CD8-positive, alpha-beta memory T cell (primary cell): ENCODE measurements at regions of chr10 and their contacts with region 1.

Region 1: DNA sequence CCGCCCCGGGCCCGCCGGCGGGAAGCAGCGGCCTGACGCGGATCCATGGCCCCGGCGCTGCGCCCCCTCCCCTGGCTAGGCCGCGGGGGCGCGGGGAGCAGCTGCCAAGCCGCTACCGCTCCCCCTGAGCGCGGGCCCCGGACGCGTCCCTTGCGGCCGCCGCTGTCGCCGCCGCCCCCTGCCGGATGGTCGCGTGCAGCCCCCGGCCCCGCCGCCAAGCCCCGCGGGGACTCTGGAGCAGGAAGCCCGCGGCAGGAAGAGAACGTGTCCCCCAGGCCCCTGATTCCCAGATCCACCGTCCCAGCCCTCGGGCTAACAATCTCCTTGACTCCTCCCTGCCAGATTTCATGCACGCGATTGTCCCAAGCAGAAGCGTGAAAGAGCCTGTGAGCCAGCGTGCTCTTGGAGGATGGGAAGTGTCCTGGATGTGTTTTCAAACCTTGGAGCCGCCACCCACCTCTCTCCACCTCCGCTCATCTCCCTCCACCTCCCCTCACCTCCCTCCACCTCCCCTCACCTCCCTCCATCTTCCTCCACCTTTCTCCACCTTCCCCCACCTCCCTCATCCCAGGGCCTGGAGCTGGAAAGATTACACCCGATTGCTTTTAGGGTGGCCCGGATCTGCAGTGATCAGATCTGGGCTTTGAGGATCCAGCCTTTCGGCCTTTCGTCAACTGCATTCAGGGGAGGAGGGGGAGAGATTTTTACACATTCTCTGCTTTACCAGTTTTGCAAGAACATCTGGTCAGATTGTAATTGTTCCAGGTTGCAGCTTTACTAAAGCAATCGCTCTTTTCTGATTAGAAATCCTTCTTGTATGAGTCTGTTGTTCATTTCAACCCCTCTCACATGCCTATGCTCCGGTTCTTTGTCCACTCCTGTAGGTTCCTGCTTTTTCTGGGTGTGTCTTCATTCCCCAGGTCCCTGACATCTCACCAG is 570 bp upstream of the PRTFDC1 start:
- DNase-seq: peak; percentile 43 to 69 (median 58)
- H3K4me3 ChIP-seq: peak overlapping the region; percentile 57
- H3K4me3 Mint-ChIP-seq: peak overlapping the region; percentile 79 to 90 (median 85)
- H3K27ac ChIP-seq: peak overlapping the region; percentile 71
- H3K27ac Mint-ChIP-seq: peak overlapping the region in 7 of 8 donors; percentile 72 to 93 (median 85)
- H3K4me1 ChIP-seq: peaks cover 12% of the 10 kb centered on the region
- H3K4me1 Mint-ChIP-seq: peaks cover 18 to 35% (median 22%) of the 10 kb centered on the region in 3 donors
- H3K27me3 ChIP-seq: no peaks in the 10 kb centered on the region
- H3K27me3 Mint-ChIP-seq: peaks cover 0 to 2% of the 10 kb centered on the region in 2 donors

Region 2: DNA sequence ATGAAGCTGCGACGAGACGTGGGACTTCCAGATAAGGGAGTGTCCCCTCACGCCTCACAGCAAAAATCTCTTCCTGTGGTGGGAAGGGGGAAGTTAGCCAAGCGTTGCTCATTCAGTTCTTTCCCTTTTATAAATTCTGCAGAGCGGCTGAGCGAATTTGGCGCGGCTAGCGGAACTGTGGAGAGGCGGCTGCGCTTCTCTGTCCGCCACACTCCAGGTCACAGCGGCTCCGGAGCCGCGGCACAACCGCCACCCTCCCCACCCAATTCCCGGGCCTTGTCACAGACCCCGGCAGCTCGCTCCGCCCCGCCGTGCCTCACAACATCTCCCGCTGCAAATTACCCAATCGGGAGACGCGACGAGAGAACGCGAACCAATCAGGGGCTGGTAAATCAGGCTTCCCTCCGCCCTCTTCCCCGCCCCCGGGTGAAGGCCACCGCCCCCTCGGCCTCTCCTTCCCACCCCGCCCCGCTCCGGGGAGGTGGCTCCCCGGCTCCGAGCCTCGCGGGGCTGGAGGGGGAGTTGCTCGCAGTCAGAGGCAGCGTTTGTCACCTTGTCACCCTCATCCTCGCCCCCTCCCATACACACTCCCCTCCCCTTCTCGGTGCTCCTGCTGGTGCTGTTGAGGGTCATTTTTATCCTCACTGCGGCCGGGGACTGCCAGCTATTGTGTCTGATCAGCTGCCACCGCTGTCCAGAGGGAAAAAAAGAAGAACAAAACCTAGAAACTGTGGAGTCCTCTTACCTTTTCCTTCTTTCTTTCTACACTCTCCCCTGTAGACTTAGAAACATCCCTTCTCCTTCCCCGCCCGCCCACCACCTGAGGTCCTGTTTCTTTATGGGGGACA is 228.4 kb before region 1 on chr10:
- CTCF ChIA-PET with region 1: interaction called, 17 read pairs
- POLR2A ChIA-PET with region 1: no interaction called
- DNase-seq: peak; percentile 92 to 96 (median 94)
- H3K4me3 ChIP-seq: peak overlapping the region; percentile 98
- H3K4me3 Mint-ChIP-seq: peak overlapping the region; percentile 93 to 97 (median 95)
- H3K27ac ChIP-seq: peak overlapping the region; percentile 76
- H3K27ac Mint-ChIP-seq: peak overlapping the region; percentile 79 to 97 (median 94)
- H3K4me1 ChIP-seq: peaks cover 11% of the 10 kb centered on the region
- H3K4me1 Mint-ChIP-seq: peaks cover 19 to 30% (median 29%) of the 10 kb centered on the region in 3 donors
- H3K27me3 ChIP-seq: no peaks in the 10 kb centered on the region
- H3K27me3 Mint-ChIP-seq: no peaks in the 10 kb centered on the region

Region 3: GRCh38 chr10:24784061-24784460 is 168.9 kb before region 1 on chr10:
- CTCF ChIA-PET with region 1: no interaction called
- POLR2A ChIA-PET with region 1: no interaction called
- DNase-seq: no peak
- H3K4me3 ChIP-seq: no peak overlapping the region
- H3K4me3 Mint-ChIP-seq: no peak overlapping the region
- H3K27ac ChIP-seq: no peak overlapping the region
- H3K27ac Mint-ChIP-seq: no peak overlapping the region
- H3K4me1 ChIP-seq: no peaks in the 10 kb centered on the region
- H3K4me1 Mint-ChIP-seq: no peaks in the 10 kb centered on the region
- H3K27me3 ChIP-seq: no peaks in the 10 kb centered on the region
- H3K27me3 Mint-ChIP-seq: peaks cover 2 to 10% of the 10 kb centered on the region in 2 donors